Mammary epithelial cell (primary cell): ENCODE measurements at regions of chrX and their contacts with region 1.

Region 1: GRCh38 chrX:15564981-15565579 is 35.7 kb downstream of the ACE2 start:
- DNase-seq: peak; percentile 80
- H3K4me3 ChIP-seq: no peak overlapping the region
- H3K27ac ChIP-seq: peak overlapping the region; percentile 20
- H3K4me1 ChIP-seq: peaks cover 6% of the 10 kb centered on the region
- H3K27me3 ChIP-seq: no peaks in the 10 kb centered on the region
- CTCF ChIP-seq: peak; percentile 91 to 95

Region 2: GRCh38 chrX:15349046-15349445 is 216.0 kb before region 1 on chrX:
- CTCF ChIA-PET with region 1: no interaction called
- dilution Hi-C with region 1: no loop called
- in situ Hi-C with region 1: loop called (anchors 5 to 10 kb)
- intact Hi-C with region 1: loop called (anchors 1 kb)
- DNase-seq: peak; percentile 64
- H3K4me3 ChIP-seq: no peak overlapping the region
- H3K27ac ChIP-seq: no peak overlapping the region
- H3K4me1 ChIP-seq: no peaks in the 10 kb centered on the region
- H3K27me3 ChIP-seq: no peaks in the 10 kb centered on the region
- CTCF ChIP-seq: peak; percentile 57 to 71

Region 3: DNA sequence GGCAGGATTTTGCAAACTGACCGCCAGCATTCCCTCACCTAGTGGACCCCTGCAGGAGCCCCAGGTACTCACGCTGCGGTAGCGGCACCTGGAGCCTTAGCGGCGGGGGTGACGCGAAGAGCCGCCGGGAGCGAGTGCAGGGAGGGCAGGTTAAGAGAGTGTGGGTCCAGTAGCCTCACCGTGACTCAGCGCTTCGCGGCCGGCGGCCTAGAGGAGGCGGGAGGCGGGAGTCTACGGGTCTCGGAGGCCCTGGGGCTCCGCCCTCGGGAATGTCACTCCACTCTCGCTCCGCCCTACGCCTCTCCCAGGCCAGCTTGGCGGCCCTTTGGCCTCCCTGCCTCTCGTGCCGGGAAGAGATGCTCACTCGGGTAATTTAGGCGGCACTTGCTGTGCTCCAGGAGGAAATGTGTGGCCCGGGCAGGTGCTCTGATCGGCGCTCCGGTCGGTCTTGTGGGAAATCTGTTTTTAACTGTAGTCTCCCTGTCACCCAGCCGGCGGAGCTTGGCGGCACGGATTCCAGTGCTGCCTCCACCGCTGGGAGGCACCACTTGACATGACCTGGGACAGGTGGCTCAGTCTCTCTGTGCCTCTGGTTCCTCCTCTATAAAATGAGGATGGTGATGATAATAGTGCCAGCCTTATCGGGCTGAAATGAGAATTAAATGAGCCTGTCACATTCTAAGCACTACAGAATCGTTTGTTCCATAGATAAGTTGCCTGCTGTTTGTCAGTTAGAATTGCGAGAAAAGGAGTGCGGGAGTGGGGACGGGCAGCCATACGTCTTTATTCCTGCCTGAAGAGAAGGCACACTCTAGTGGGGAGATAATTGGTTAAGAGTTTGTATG is 71.7 kb before region 1 on chrX and contains the start of gene PIR:
- CTCF ChIA-PET with region 1: interaction called, 4 read pairs
- dilution Hi-C with region 1: no loop called
- in situ Hi-C with region 1: loop called in 1 of 2 experiments (anchors 5 kb)
- intact Hi-C with region 1: loop called (anchors 1 kb)
- DNase-seq: peak; percentile 95
- H3K4me3 ChIP-seq: peak within 1 kb of the TSS; percentile 53 to 70 (median 57)
- H3K27ac ChIP-seq: peak within 1 kb of the TSS; percentile 73
- H3K4me1 ChIP-seq: peaks cover 34% of the 10 kb centered on the region
- H3K27me3 ChIP-seq: no peaks in the 10 kb centered on the region
- CTCF ChIP-seq: peak; percentile 44 to 61
- total RNA-seq, gene PIR: 32.8 to 40.9 TPM

Region 4: DNA sequence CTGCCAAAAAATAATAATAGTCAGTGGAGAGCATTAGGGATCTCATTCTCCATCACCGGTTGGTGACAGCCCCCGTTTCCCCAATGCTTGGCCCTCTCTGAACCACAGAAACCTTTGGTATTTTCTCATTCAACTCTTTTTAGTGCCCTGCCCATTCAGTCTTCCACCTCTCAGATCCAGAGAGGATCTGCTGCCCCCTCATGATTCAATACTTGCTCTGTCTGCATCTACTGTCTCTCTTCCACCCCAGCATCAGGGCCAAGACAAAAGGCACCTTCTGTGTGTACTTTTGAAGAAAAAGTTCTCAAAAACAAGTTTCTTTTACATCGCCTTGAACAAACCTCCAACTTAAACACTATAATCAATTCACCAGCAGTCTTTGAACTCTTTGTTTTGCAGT is 80.2 kb after region 1 on chrX:
- CTCF ChIA-PET with region 1: no interaction called
- dilution Hi-C with region 1: no loop called
- in situ Hi-C with region 1: no loop called
- intact Hi-C with region 1: loop called (anchors 1 kb)
- DNase-seq: no peak
- H3K4me3 ChIP-seq: no peak overlapping the region
- H3K27ac ChIP-seq: no peak overlapping the region
- H3K4me1 ChIP-seq: no peaks in the 10 kb centered on the region
- H3K27me3 ChIP-seq: no peaks in the 10 kb centered on the region
- CTCF ChIP-seq: no peak

Region 5: GRCh38 chrX:15789979-15790768 is 225.1 kb after region 1 on chrX and contains the start of gene ZRSR2:
- CTCF ChIA-PET with region 1: no interaction called
- dilution Hi-C with region 1: no loop called
- in situ Hi-C with region 1: no loop called
- intact Hi-C with region 1: loop called (anchors 2 kb)
- DNase-seq: peak; percentile 90
- H3K4me3 ChIP-seq: peak within 1 kb of the TSS; percentile 66 to 85 (median 72)
- H3K27ac ChIP-seq: peak within 1 kb of the TSS; percentile 48
- H3K4me1 ChIP-seq: peaks cover 11% of the 10 kb centered on the region
- H3K27me3 ChIP-seq: no peaks in the 10 kb centered on the region
- CTCF ChIP-seq: peak in 1 of 2 donors; percentile 7
- total RNA-seq, gene ZRSR2: 2.5 to 20.3 TPM